ENCODE measurements at regions of chr4 and their contacts with region 1.

Region 1: GRCh38 chr4:78951862-78952472 is 12.7 kb upstream of the PAQR3 start:
- DNase-seq: peak; percentile 56 to 70 (median 58)
- ATAC-seq: peak; percentile 86
- H3K4me3 ChIP-seq: no peak overlapping the region
- H3K27ac ChIP-seq: no peak overlapping the region
- H3K4me1 ChIP-seq: peaks cover 0 to 4% of the 10 kb centered on the region in 2 experiments; a peak in 1 of 5 replicates
- H3K27me3 ChIP-seq: no peaks in the 10 kb centered on the region
- CTCF ChIP-seq: peak; percentile 58 to 84 (median 73)
- EP300 ChIP-seq: no peak
- POLR2A ChIP-seq: no peak
- RAD21 ChIP-seq: peak; percentile 76 to 91

Region 2: DNA sequence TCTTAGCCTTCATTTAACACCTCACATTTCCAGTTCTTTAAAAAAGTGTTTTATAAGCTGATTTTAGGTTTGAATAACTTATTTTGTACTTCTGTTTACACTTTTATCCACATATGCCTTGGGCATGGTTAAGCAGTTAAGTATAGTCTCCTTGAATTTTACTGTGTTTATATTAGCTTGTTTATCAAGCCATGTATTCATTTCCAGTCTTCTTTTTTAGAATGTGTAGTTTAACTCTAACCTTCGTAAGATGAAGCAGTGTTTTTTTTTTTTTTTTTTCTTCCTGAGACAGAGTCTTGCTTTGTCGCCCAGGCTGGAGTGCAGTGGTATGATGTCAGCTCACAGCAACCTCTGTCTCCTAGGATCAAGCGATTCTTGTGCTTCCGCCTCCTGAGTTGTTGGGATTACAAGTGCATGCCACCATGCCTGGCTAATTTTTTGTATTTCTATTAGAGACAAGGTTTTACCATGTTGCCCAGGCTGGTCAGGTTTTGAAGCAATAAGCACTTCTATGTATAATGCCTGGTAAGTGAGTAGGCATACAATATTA is 133.4 kb before region 1 on chr4:
- CTCF ChIA-PET with region 1: no interaction called
- POLR2A ChIA-PET with region 1: no interaction called
- in situ Hi-C with region 1: no loop called
- intact Hi-C with region 1: no loop called
- DNase-seq: no peak
- ATAC-seq: peak; percentile 26; the same call in 1 of the 3 replicates
- H3K4me3 ChIP-seq: no peak overlapping the region
- H3K27ac ChIP-seq: no peak overlapping the region
- H3K4me1 ChIP-seq: peaks cover 0 to 13% of the 10 kb centered on the region in 2 experiments; a peak in 2 of 5 replicates
- H3K27me3 ChIP-seq: no peaks in the 10 kb centered on the region
- CTCF ChIP-seq: no peak
- EP300 ChIP-seq: no peak
- POLR2A ChIP-seq: no peak
- RAD21 ChIP-seq: no peak

Region 3: DNA sequence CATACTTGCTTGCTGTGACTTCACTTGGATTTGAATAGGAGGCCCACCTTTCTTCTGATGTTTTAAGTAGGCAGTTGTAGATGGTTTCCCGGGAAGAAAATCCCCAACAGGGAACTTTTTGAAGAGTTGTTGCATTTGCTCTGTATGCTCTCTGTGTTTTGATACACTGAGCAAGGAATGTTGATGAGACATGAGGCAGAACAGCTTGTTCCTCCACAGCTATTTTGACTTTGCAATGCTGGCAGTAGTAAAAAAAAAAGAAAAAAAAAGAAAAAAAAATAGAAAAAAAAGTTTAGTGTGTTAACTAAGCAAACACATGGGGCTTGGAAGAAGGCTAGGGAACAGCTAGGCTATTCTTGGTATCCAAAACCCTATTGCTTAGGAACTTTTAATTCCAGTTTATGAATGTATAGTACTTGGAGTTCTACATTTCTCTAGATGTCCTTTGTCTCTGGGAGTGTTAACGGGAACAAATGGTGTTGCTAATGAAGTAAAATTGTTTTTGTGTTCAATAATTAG is 10.7 kb after region 1 on chr4:
- CTCF ChIA-PET with region 1: no interaction called
- POLR2A ChIA-PET with region 1: no interaction called
- in situ Hi-C with region 1: no loop called
- intact Hi-C with region 1: no loop called
- DNase-seq: no peak
- ATAC-seq: no peak
- H3K4me3 ChIP-seq: no peak overlapping the region
- H3K27ac ChIP-seq: no peak overlapping the region
- H3K4me1 ChIP-seq: no peaks in the 10 kb centered on the region
- H3K27me3 ChIP-seq: no peaks in the 10 kb centered on the region
- CTCF ChIP-seq: no peak
- EP300 ChIP-seq: no peak
- POLR2A ChIP-seq: no peak
- RAD21 ChIP-seq: no peak

Region 4: GRCh38 chr4:79209822-79210635 is 258.1 kb after region 1 on chr4:
- CTCF ChIA-PET with region 1: no interaction called
- POLR2A ChIA-PET with region 1: no interaction called
- in situ Hi-C with region 1: no loop called
- intact Hi-C with region 1: loop called (anchors 5 kb)
- DNase-seq: peak; percentile 29 to 97 (median 55)
- ATAC-seq: peak; percentile 76
- H3K4me3 ChIP-seq: peak overlapping the region; percentile 42
- H3K27ac ChIP-seq: peak overlapping the region; percentile 95
- H3K4me1 ChIP-seq: peaks cover 4 to 32% of the 10 kb centered on the region in 2 experiments; a peak in 3 of 5 replicates
- H3K27me3 ChIP-seq: no peaks in the 10 kb centered on the region
- CTCF ChIP-seq: no peak
- EP300 ChIP-seq: peak; percentile 99
- POLR2A ChIP-seq: peak; percentile 80
- RAD21 ChIP-seq: no peak; a peak in 1 of 4 replicates

Region 5: DNA sequence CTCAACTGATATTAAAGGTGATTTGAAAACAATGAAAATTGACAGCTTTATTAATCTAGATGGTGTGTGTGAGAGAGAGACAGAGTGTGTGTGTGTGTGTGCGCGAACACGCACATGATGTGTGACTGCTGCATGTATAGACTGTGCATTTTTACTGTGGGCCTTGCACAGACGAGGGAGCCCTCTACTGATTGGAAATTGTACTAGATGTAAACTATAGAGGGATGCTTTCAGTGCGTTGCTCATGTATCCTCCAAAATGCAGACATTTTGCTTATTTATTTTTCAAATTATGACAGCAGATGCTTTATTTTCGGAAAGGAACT is 624.4 kb after region 1 on chr4:
- CTCF ChIA-PET with region 1: no interaction called
- POLR2A ChIA-PET with region 1: no interaction called
- in situ Hi-C with region 1: no loop called
- intact Hi-C with region 1: loop called (anchors 2 kb)
- DNase-seq: peak in 3 of 4 experiments; percentile 11 to 61 (median 27)
- ATAC-seq: peak; percentile 94
- H3K4me3 ChIP-seq: no peak overlapping the region
- H3K27ac ChIP-seq: no peak overlapping the region
- H3K4me1 ChIP-seq: no peaks in the 10 kb centered on the region; a peak in 2 of 5 replicates
- H3K27me3 ChIP-seq: no peaks in the 10 kb centered on the region
- CTCF ChIP-seq: peak; percentile 50 to 72 (median 62); a peak in 5 of 6 replicates
- EP300 ChIP-seq: no peak
- POLR2A ChIP-seq: no peak
- RAD21 ChIP-seq: peak; percentile 75 to 84

Measured in K562 (cell line).